ENCODE measurements at regions of chrX and their contacts with region 1.

Region 1: GRCh38 chrX:68710870-68711576 is 63.6 kb downstream of the STARD8 start:
- DNase-seq: no peak
- H3K4me3 ChIP-seq: no peak overlapping the region
- H3K27ac ChIP-seq: no peak overlapping the region
- H3K27me3 ChIP-seq: no peaks in the 10 kb centered on the region
- CTCF ChIP-seq: peak; percentile 66

Region 2: GRCh38 chrX:68511255-68511654 is 199.8 kb before region 1 on chrX:
- CTCF ChIA-PET with region 1: interaction called, 47 read pairs
- POLR2A ChIA-PET with region 1: no interaction called
- DNase-seq: no peak
- H3K4me3 ChIP-seq: no peak overlapping the region
- H3K27ac ChIP-seq: no peak overlapping the region
- H3K27me3 ChIP-seq: no peaks in the 10 kb centered on the region
- CTCF ChIP-seq: peak; percentile 80

Region 3: DNA sequence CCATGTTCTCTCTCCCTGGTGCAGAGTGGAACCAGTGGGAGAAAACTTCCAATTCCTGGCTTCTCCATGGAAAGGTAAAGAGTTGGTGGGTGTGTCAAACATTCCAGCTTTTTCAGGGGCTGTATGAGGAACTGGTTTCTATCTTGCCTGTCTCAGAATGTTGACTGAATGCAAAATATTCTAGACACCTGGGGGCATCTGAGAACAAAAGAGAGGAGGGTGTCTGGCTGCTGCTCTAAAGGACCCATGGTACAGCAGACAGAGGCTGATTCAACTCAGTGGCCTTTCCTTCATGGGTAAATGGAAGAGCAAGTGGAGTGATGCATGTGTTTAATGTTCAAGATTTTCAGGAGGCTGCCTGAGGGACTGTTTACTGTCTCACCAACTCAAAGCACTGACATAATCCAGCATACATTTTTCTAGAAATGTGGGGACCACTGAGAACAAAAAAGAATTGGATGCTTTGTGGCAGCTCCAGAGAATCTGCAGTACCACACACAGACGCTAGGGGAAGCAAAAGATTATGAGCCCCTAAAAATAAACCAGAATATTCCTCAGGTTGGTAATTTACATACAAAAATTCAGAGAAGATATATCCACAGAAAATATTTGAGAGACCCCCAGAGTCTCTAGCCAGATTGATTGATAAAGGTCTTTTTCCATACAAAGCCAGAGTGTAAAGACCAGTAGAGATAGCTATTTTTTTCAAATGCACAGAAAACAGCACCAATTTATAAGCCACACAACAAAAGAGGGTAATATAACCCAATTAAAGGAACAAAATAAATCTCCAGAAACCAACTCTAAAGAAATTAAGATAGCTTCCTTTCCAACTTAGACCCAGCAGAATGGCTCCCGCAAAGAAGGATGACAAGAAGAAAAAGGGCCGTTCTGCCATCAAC is 111.5 kb before region 1 on chrX:
- CTCF ChIA-PET with region 1: interaction called, 27 read pairs
- POLR2A ChIA-PET with region 1: no interaction called
- DNase-seq: no peak
- H3K4me3 ChIP-seq: no peak overlapping the region
- H3K27ac ChIP-seq: no peak overlapping the region
- H3K27me3 ChIP-seq: no peaks in the 10 kb centered on the region
- CTCF ChIP-seq: peak; percentile 75

Region 4: GRCh38 chrX:68699960-68700746 is 10.9 kb before region 1 on chrX:
- CTCF ChIA-PET with region 1: interaction called, 12 read pairs
- POLR2A ChIA-PET with region 1: no interaction called
- DNase-seq: no peak
- H3K4me3 ChIP-seq: no peak overlapping the region
- H3K27ac ChIP-seq: peak overlapping the region; percentile 21
- H3K27me3 ChIP-seq: no peaks in the 10 kb centered on the region
- CTCF ChIP-seq: no peak

Measured in AG04450 (cell line).